ENCODE measurements at regions of chr1 and their contacts with region 1.

Region 1: DNA sequence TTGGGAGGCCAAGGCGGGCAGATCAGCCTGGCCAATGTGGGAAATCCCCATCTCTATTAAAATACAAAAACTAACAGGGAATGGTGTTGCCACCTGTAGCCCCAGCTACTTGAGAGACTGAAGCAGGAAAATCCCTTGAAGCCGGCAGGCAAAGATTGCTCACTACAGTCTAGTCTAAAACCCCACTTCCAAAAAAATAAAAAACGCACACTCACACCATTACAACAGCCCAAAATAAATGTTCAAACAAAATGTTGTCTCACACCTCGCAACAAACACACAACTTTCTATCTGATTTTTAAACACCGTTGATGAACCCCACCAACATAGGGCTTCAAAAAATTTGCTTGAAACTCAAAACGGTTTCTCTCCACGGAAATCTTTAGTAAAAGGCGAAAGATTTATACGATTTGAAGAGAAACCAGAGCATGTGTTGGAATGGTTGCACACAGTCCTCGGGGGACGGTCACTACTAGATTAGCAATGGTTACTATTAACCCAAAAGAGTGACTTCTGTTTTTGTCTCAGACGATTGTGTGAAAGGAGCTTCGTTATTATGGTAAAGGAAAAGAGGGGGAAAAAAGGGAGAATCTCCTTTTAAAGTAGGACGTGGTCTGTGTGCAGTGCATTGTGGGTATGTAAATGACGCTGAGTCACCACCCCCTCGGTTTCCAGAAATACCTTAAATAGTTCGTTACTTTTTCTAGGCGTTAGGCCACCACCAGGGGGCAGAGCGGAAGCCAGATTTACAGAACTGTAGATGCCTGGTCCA is at the start of gene RNU5D-1:
- DNase-seq: peak; percentile 89
- H3K4me3 ChIP-seq: peak within 1 kb of the TSS; percentile 2 to 23; a peak in 2 of 4 replicates
- H3K27ac ChIP-seq: peak within 1 kb of the TSS; percentile 95 to 98
- H3K4me1 ChIP-seq: no peaks in the 10 kb centered on the region
- H3K27me3 ChIP-seq: no peaks in the 10 kb centered on the region
- CTCF ChIP-seq: peak; percentile 94
- EP300 ChIP-seq: peak; percentile 51 to 69; a peak in 3 of 4 replicates
- RAD21 ChIP-seq: peak; percentile 54
- polyA plus RNA-seq, gene RNU5D-1: not detected in 2 replicates

Region 2: DNA sequence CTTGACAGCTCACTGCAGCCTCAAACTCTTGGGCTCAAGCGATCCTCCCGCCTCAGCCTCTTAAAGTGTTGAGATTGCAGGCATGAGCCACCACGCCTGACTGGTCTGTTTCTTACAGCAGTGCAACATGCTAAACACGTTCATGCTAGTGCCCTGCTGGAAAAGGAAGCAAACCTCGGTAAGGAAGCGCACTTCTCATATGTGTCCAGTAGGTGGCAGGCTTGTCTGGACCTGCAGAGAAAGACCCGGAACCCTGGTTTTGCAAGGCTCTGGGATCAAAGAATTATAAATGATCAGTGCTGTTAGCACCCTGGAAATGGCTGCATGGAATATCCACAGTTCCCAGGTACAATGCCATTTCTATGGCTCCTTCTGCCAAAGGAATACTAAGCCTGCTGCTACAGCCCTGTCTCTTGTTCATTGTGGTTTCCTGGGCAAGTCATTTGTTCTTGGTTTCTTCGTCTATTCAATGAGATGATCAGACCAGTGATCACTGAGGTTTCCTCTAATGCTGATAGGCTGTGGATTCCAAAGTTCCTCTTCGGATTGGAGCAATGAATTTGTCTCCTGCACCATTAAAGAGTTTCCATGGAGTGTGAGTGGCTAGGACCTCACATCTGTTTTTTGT is 15.9 kb before region 1 on chr1:
- CTCF ChIA-PET with region 1: interaction called, 52 read pairs
- POLR2A ChIA-PET with region 1: no interaction called
- DNase-seq: peak; percentile 83
- H3K4me3 ChIP-seq: peak overlapping the region in 1 of 2 experiments; percentile 24; a peak in 1 of 4 replicates
- H3K27ac ChIP-seq: no peak overlapping the region
- H3K4me1 ChIP-seq: no peaks in the 10 kb centered on the region
- H3K27me3 ChIP-seq: no peaks in the 10 kb centered on the region
- CTCF ChIP-seq: peak; percentile 93
- EP300 ChIP-seq: no peak
- RAD21 ChIP-seq: peak; percentile 69

Region 3: GRCh38 chr1:44799770-44800584 is 69.0 kb after region 1 on chr1 and contains the start of gene PLK3:
- CTCF ChIA-PET with region 1: interaction called, 10 read pairs
- POLR2A ChIA-PET with region 1: interaction called, 3 read pairs
- DNase-seq: peak; percentile 97
- H3K4me3 ChIP-seq: peak within 1 kb of the TSS; percentile 87 to 96
- H3K27ac ChIP-seq: peak within 1 kb of the TSS; percentile 97 to 100
- H3K4me1 ChIP-seq: peaks cover 16 to 20% of the 10 kb centered on the region in 2 experiments; a peak in 2 of 4 replicates
- H3K27me3 ChIP-seq: no peaks in the 10 kb centered on the region
- CTCF ChIP-seq: peak; percentile 86
- EP300 ChIP-seq: peak in 1 of 2 experiments; percentile 30; a peak in 1 of 4 replicates
- RAD21 ChIP-seq: peak; percentile 72
- polyA plus RNA-seq, gene PLK3: 68.3 and 82.8 TPM in 2 replicates

Region 4: GRCh38 chr1:44894591-44894990 is 163.7 kb after region 1 on chr1:
- CTCF ChIA-PET with region 1: no interaction called
- POLR2A ChIA-PET with region 1: no interaction called
- DNase-seq: no peak
- H3K4me3 ChIP-seq: no peak overlapping the region
- H3K27ac ChIP-seq: peak overlapping the region; percentile 61 to 89; a peak in 3 of 4 replicates
- H3K4me1 ChIP-seq: peaks cover 0 to 11% of the 10 kb centered on the region in 2 experiments; a peak in 1 of 4 replicates
- H3K27me3 ChIP-seq: no peaks in the 10 kb centered on the region
- CTCF ChIP-seq: no peak
- EP300 ChIP-seq: peak in 1 of 2 experiments; percentile 77; a peak in 1 of 4 replicates
- RAD21 ChIP-seq: no peak

Measured in SK-N-SH (cell line).